Ovary (tissue), 10 donors: ENCODE measurements at regions of chr1 and their contacts with region 1.

Region 1: GRCh38 chr1:45583264-45583665 is 576 bp upstream of the NASP start:
- DNase-seq: peak; percentile 93 to 96 (median 94)
- H3K4me3 ChIP-seq: peak overlapping the region; percentile 71
- H3K27ac ChIP-seq: peak overlapping the region; percentile 18 to 82
- H3K4me1 ChIP-seq: peaks cover 9% of the 10 kb centered on the region
- H3K27me3 ChIP-seq: no peaks in the 10 kb centered on the region
- CTCF ChIP-seq: no peak
- EP300 ChIP-seq: no peak
- POLR2A ChIP-seq: no peak

Region 2: GRCh38 chr1:45339789-45340570 is 243.3 kb before region 1 on chr1 and contains the starts of genes MUTYH and TOE1:
- intact Hi-C with region 1: loop called in 1 of 4 experiments (anchors 10 kb)
- DNase-seq: peak; percentile 89 to 95 (median 90)
- H3K4me3 ChIP-seq: peak within 1 kb of the TSS; percentile 55
- H3K27ac ChIP-seq: peak within 1 kb of the TSS; percentile 77 to 89
- H3K4me1 ChIP-seq: peaks cover 7% of the 10 kb centered on the region
- H3K27me3 ChIP-seq: no peaks in the 10 kb centered on the region
- CTCF ChIP-seq: peak in 1 of 3 donors; percentile 30
- EP300 ChIP-seq: no peak
- POLR2A ChIP-seq: peak; percentile 42
- total RNA-seq, gene MUTYH: 23.0 to 38.8 (median 27.4) TPM
- total RNA-seq, gene TOE1: 6.7 to 16.3 (median 9.0) TPM

Region 3: DNA sequence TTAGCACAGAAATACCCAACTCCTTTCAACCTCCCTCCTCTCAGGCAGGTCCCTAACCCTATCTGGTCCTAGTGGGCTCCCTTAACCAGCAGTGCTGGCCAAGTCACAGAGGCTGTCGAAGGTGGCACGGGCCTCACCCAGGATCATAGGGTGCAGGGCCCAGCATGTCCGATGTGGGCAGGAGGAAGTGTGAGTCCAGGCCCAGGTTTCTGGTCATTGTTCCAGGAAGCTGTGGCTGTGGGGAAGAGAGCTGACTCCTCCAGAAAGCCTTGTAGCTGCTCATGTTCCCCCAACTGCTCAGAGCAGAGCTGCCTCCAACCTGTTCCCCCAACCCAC is 38.2 kb after region 1 on chr1:
- intact Hi-C with region 1: no loop called
- DNase-seq: no peak
- H3K4me3 ChIP-seq: no peak overlapping the region
- H3K27ac ChIP-seq: no peak overlapping the region
- H3K4me1 ChIP-seq: no peaks in the 10 kb centered on the region
- H3K27me3 ChIP-seq: no peaks in the 10 kb centered on the region
- CTCF ChIP-seq: no peak
- EP300 ChIP-seq: no peak
- POLR2A ChIP-seq: no peak

Region 4: DNA sequence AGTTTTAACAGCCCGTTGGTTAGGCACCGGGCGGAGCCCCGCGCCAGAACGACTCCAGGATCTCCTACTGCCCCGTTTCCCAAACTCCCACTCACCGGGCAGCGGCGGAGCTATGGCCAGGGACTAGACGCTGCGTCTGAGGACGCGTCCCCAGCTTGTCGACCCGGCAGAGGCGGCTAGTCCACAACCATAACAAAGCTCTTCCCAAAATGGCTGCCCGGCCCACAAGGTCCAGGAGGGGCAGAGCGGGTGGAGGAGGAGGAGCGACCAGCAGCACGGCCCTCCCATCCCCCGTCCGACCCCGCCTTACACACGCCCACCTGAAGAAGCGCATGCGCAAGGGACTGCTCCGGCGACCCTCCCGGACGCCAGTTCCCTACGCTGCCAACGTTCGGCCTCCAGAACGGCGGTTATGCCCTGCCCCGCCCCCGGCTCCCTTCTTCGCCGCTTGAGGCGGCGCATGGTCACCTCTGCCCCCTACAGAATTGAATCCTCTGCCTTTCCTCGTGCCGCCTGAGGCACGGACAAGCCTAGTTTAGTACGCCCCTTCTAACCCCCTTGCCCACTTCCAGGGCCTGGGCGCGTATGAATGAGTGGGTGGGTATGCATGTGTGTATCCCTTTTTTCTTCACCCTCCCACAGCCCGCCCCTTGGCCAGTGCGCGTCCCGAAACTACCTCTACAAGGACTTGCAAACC is 103.2 kb after region 1 on chr1 and contains the start of gene GPBP1L1:
- intact Hi-C with region 1: loop called in 1 of 4 experiments (anchors 5 kb)
- DNase-seq: peak; percentile 97 to 98 (median 98)
- H3K4me3 ChIP-seq: peak within 1 kb of the TSS; percentile 98
- H3K27ac ChIP-seq: peak within 1 kb of the TSS; percentile 92 to 96
- H3K4me1 ChIP-seq: peaks cover 4% of the 10 kb centered on the region
- H3K27me3 ChIP-seq: no peaks in the 10 kb centered on the region
- CTCF ChIP-seq: no peak
- EP300 ChIP-seq: no peak
- POLR2A ChIP-seq: peak; percentile 85
- total RNA-seq, gene GPBP1L1: 72.7 to 89.5 (median 80.8) TPM